Cardiac septum (tissue), 1 donor: ENCODE measurements at regions of chr17 and their contacts with region 1.

Region 1: DNA sequence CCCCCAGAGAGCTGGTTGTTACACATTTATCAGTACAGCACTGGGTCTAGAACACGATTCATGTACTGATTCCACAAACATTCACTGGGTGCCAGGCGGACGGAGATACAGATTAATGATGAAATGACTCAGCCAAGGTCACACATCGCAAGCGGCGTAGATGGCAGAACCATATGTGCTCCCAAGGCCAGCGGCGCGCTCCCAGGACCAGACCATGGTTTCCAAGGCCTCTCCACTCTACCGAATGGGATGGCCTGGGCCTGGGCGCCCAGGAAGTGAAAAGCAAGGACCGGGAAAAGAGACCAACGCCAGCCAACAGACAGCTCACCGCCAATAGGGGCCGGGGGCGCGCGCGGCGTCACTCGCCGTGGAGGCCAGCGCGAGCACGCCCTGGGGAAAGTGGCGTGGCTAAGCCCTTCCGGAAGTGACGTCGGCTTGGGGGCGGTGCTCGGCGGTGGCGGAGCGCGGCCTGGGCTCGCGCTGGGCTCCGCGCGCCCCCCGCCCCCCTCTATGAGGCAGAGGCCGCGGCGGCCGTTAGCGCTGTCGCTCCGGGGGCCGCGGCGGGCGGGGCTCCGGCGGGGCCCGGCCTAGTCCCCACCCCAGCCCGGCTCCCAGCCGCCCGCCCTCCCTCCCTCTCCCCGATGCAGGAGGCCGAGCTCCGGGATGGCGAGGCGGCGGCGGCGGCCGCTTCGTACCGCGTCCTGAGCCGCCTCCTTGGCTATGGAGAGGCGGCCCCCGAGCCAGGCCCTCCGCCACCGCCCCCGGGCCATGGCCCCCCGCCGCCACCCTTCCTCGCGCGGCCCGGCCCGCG is at the start of gene SOCS7:
- DNase-seq: peak; percentile 97
- total RNA-seq, gene SOCS7: 17.8 TPM

Region 2: GRCh38 chr17:38415250-38416194 is 63.9 kb after region 1 on chr17:
- intact Hi-C with region 1: loop called (anchors 1 kb)
- DNase-seq: no peak

Region 3: DNA sequence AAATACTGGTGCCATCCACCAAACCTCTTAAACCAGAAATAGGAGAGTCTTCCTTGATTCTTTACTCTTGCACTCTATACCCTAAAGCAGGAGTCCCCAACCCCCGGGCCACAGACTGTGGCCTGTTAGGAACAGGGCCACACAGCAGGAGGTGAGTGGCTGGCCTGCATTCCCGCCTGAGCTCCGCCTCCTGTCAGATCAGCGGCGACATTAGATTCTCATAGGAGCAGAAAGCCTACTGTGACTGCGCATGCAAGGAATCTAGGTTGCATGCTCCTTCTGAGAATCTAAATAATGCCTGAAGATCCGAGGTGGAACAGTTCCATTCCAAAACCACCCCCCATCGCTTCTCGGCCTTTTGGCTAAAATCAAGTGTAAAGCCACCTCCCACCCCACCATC is 284.4 kb after region 1 on chr17:
- intact Hi-C with region 1: no loop called
- DNase-seq: no peak